Spleen (tissue), 13 donors: ENCODE measurements at regions of chr9 and their contacts with region 1.

Region 1: GRCh38 chr9:132381966-132382541 is 24.6 kb downstream of the TTF1 start:
- DNase-seq: peak; percentile 77
- H3K4me3 ChIP-seq: peak overlapping the region in 1 of 8 donors; percentile 44
- H3K27ac ChIP-seq: peak overlapping the region; percentile 44 to 90 (median 82)
- H3K4me1 ChIP-seq: peaks cover 10 to 64% (median 34%) of the 10 kb centered on the region in 6 donors
- H3K27me3 ChIP-seq: no peaks in the 10 kb centered on the region
- CTCF ChIP-seq: no peak
- POLR2A ChIP-seq: peak in 1 of 3 donors; percentile 31

Region 2: DNA sequence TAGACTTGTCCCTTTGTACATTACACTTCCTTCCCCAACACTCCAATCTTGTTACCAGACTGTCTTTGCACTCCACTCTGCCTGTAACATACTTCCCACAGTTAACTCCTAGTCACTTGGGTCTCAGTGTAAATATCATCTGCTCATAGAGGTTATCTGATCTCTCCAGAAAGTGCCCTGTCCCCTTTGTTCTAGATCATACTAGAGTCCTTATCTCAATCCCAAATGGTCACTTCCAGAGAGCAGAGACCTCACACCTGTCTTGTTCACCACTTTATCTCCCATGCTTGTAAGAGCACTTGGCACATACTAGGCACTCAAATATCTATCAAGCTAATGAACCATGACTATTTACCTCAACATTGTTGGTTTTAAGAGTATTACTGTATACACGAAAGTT is 57.6 kb before region 1 on chr9:
- intact Hi-C with region 1: loop called (anchors 2 kb)
- DNase-seq: no peak
- H3K4me3 ChIP-seq: no peak overlapping the region
- H3K27ac ChIP-seq: peak overlapping the region in 2 of 8 donors; percentile 23 to 33
- H3K4me1 ChIP-seq: peaks cover 0 to 63% (median 27%) of the 10 kb centered on the region in 6 donors
- H3K27me3 ChIP-seq: no peaks in the 10 kb centered on the region
- CTCF ChIP-seq: no peak
- POLR2A ChIP-seq: no peak

Region 3: DNA sequence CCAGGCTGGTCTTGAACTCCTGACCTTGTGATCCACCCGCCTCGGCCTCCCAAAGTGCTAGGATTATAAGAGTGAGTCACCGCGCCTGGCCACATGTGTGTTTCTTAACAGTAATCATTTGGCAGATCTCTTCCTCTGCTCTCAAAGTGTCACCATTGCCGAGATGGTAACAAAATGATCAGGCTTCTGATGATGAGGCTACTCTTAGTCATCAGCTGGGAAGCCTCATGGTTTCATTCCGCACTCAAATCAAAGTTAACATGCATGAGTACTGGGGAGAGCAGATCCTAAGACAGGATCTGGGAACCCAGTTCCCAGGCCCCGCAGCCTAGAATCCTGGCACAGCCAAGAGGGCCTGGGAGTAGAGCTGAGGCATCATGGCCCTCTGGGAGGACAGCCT is 227.8 kb after region 1 on chr9:
- intact Hi-C with region 1: no loop called
- DNase-seq: no peak
- H3K4me3 ChIP-seq: no peak overlapping the region
- H3K27ac ChIP-seq: no peak overlapping the region
- H3K4me1 ChIP-seq: no peaks in the 10 kb centered on the region
- H3K27me3 ChIP-seq: no peaks in the 10 kb centered on the region
- CTCF ChIP-seq: no peak
- POLR2A ChIP-seq: no peak